Gastrocnemius medialis (tissue), 4 donors: ENCODE measurements at regions of chr17 and their contacts with region 1.

Region 1: GRCh38 chr17:21166595-21167210 is 39.9 kb downstream of the DHRS7B start:
- DNase-seq: no peak
- ATAC-seq: peak; percentile 53 to 63
- H3K4me3 ChIP-seq: peak overlapping the region; percentile 34 to 42 (median 36)
- H3K27ac ChIP-seq: peak overlapping the region; percentile 92 to 98 (median 96)
- H3K4me1 ChIP-seq: peaks cover 84 to 89% of the 10 kb centered on the region in 2 donors
- H3K27me3 ChIP-seq: no peaks in the 10 kb centered on the region
- CTCF ChIP-seq: no peak
- POLR2A ChIP-seq: no peak

Region 2: GRCh38 chr17:21245639-21246084 is 79.0 kb after region 1 on chr17:
- in situ Hi-C with region 1: no loop called
- intact Hi-C with region 1: loop called (anchors 2 kb)
- DNase-seq: peak; percentile 81 to 96
- ATAC-seq: peak; percentile 63 to 68
- H3K4me3 ChIP-seq: no peak overlapping the region
- H3K27ac ChIP-seq: peak overlapping the region; percentile 89 to 95 (median 92)
- H3K4me1 ChIP-seq: peaks cover 81 to 96% of the 10 kb centered on the region in 2 donors
- H3K27me3 ChIP-seq: no peaks in the 10 kb centered on the region
- CTCF ChIP-seq: no peak
- POLR2A ChIP-seq: peak in 1 of 2 donors; percentile 16

Region 3: DNA sequence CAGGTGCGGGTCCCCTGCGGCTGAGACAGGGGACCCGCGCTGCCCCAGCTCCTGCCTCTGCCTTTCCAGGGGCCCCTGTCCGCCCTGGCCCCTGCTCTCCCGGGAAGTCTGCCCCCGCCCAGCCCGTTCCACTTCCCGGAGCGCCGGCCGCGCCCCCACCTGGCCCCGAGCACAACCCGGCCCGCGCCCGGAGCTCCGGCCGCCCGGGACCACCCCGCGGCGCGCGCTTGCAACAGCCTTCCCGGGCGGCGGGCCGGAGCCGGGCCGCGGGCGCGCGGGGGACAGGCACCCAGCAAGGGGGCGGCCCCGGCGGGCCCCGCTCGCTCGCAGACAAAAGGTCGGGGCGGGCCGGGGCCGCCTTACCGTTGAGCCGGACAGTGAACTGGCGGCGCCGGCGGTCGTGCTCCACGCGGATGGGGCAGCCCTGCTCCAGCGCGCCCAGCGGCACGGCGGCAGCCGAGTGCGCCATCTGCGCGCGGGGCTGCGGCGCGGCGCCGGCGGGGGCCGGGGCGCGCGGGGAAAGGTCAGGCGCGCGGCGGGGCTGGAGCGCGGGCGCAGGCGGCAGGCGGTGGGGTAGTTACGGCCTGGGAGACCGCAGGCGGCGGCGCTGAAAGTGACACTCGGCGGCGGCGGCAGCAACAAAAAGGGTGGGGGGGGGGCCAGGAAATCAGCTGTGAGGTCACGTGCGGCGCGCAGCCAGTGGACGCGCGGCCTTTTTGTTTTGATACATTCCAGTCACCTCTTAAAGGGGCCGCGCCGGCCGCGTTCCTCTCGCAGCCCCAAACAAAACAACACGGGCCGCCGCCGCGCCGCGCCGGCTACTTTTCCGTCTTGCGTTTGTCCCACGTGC is 86.3 kb after region 1 on chr17 and contains the start of gene NATD1:
- in situ Hi-C with region 1: no loop called
- intact Hi-C with region 1: loop called (anchors 2 kb)
- DNase-seq: peak; percentile 88 to 93
- ATAC-seq: peak; percentile 67 to 79
- H3K4me3 ChIP-seq: peak within 1 kb of the TSS; percentile 66 to 80 (median 70)
- H3K27ac ChIP-seq: peak within 1 kb of the TSS; percentile 89 to 95 (median 92)
- H3K4me1 ChIP-seq: peaks cover 45 to 51% of the 10 kb centered on the region in 2 donors
- H3K27me3 ChIP-seq: no peaks in the 10 kb centered on the region
- CTCF ChIP-seq: no peak
- POLR2A ChIP-seq: peak; percentile 86 to 91
- total RNA-seq, gene NATD1: 10.1 to 21.2 (median 15.5) TPM